Activated naive CD4-positive, alpha-beta T cell treated with anti-CD3 and anti-CD28 coated beads for 36 hours (primary cell): ENCODE measurements at regions of chr3 and their contacts with region 1.

Region 1: DNA sequence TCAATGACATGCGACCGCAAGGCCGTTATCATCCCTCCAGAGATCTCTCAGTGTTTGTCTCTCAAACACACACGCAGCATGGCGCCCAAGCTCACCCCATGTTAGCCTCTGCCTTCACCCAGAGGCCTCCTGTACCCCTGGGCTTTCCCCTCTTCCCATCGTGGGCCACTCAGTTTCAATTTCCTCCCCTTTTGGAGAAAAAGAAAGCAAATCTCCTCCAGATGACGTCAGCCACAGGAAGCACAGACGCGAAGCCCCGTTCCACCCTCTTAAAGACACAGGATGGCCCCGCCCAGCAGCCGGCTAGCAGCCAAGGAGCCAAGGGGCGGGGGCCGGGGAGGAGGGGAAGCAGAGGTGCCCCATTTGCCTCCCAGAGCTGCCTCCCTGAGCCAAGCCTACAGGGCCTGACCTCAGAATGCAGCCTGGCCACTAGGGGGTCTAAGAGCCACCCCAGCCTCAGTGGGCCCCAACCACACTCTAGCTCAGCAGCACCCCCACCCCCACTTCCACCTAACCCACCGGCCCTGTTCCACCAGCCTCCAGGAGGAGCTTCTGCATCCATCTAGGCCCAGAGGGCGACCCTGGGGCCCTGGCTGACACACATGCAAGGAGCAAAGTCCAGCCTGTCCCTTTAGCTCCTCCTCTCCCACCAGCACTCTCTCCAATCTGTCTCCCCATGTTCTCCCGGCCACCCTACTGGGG is 26.5 kb downstream of the ATRIP start:
- DNase-seq: peak; percentile 99
- H3K4me3 Mint-ChIP-seq: peak overlapping the region; percentile 78
- H3K27ac Mint-ChIP-seq: peak overlapping the region; percentile 97
- H3K4me1 Mint-ChIP-seq: peaks cover 55% of the 10 kb centered on the region
- H3K27me3 Mint-ChIP-seq: no peaks in the 10 kb centered on the region

Region 2: GRCh38 chr3:48240711-48241491 is 232.2 kb before region 1 on chr3 and contains the start of gene ZNF589:
- CTCF ChIA-PET with region 1: no interaction called
- intact Hi-C with region 1: loop called (anchors 1 kb)
- DNase-seq: peak; percentile 96
- H3K4me3 Mint-ChIP-seq: peak within 1 kb of the TSS; percentile 88
- H3K27ac Mint-ChIP-seq: peak within 1 kb of the TSS; percentile 86
- H3K4me1 Mint-ChIP-seq: peaks cover 28% of the 10 kb centered on the region
- H3K27me3 Mint-ChIP-seq: no peaks in the 10 kb centered on the region
- total RNA-seq, gene ZNF589: 15.8 to 16.3 TPM

Region 3: DNA sequence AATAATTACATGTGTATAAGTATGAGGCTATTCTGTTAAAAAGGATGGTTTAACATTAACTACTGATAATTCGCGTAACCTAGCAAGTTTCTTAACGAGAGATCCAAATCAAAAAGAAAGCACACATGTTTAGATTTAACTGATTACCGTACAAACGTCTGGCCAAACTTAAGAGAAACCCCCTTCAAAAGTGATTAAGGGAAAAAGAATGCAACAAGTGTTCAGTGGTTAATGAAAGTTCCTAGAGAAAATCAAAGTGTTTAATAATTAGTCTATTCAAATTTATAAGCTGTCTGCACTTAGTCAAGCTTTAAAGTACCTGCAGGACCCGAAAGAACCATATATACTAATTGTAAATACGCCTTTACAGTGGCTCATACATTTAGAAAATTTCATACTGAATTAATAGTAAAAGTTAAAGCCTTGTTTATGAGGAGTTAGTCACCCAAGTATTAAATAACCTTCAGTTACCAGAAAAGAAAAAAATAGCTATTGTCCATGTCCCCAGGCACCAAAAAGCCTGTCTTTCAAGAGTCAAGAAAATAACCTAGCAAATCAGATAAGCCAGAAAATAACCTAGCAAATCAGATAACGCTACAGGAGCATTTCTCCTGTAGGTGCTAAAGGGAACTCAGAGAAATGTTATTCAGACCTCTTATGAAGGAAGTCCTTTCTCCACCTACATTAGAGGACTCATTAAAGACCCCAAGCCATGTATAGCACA is 197.6 kb before region 1 on chr3:
- CTCF ChIA-PET with region 1: no interaction called
- intact Hi-C with region 1: no loop called
- DNase-seq: no peak
- H3K4me3 Mint-ChIP-seq: no peak overlapping the region
- H3K27ac Mint-ChIP-seq: no peak overlapping the region
- H3K4me1 Mint-ChIP-seq: no peaks in the 10 kb centered on the region
- H3K27me3 Mint-ChIP-seq: no peaks in the 10 kb centered on the region

Region 4: GRCh38 chr3:48507351-48508061 is 34.4 kb after region 1 on chr3:
- CTCF ChIA-PET with region 1: interaction called, 25 read pairs
- intact Hi-C with region 1: loop called (anchors 1 kb)
- DNase-seq: peak; percentile 82
- H3K4me3 Mint-ChIP-seq: peak overlapping the region; percentile 32
- H3K27ac Mint-ChIP-seq: peak overlapping the region; percentile 66
- H3K4me1 Mint-ChIP-seq: peaks cover 47% of the 10 kb centered on the region
- H3K27me3 Mint-ChIP-seq: no peaks in the 10 kb centered on the region

Region 5: DNA sequence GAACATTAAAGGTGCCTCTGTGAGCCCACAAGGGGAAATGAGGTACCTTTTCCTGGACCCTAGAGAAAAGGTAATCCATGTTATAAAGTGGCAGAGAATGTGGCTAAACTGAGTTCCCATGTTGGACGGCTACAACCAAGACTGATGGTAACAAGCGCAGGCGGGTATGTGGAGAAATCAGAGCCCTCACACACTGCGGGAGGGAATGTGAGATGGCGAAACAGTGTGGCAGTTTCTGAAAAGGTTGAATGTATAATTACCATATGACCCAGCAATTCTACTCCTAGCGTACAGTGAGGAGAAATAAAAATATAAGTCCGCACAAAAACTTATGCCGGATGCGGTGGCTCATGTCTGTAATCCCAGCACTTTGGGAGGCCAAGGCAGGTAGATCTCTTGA is 55.0 kb after region 1 on chr3:
- CTCF ChIA-PET with region 1: no interaction called
- intact Hi-C with region 1: no loop called
- DNase-seq: no peak
- H3K4me3 Mint-ChIP-seq: no peak overlapping the region
- H3K27ac Mint-ChIP-seq: no peak overlapping the region
- H3K4me1 Mint-ChIP-seq: no peaks in the 10 kb centered on the region
- H3K27me3 Mint-ChIP-seq: no peaks in the 10 kb centered on the region

Region 6: DNA sequence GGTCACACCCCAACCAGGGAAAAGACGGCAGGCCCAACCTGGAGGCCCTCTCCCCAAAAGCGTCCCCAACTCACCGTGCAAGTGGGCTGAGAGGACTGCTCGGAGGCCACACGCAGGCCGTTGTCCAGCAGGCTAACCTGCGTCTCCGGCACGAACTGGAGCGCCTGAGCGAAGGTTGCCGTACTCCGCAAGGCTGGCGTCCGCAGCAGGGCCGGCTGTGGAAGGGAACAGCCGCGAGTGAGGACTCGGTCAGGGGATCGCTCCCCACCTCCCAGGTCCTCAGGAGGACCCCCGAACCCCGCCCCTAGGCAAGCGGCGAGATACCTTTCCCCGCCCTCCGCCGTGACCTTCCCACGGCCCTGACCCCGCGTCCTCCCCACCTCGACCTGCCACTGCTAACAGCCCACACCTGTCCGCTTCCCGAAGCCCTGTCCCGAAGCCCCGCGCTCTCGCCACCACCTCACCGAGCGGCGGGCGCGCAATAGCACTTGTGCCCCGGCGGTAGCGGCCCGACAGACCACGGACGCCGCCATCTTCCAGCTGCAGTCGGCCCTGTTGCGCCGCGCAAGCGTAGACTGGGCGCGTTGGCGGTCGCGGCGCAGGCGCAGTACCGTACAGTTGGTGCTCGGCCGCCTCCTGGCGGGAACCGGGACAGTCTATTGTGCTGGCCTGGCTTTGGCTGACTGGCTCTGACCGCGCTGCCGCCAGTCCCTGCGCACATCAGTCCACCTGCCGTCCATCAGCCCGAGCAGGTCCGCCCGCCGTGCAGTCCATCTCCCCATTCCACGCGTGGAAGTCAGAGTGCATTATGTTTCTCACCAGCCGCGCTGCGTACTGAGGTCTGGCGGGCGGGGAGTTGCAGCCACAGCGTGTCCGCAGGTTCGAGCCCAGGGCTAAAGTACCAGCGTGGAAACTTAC is 136.3 kb after region 1 on chr3 and contains the start of gene UQCRC1:
- CTCF ChIA-PET with region 1: no interaction called
- intact Hi-C with region 1: loop called (anchors 5 kb)
- DNase-seq: peak; percentile 94
- H3K4me3 Mint-ChIP-seq: peak within 1 kb of the TSS; percentile 99
- H3K27ac Mint-ChIP-seq: peak within 1 kb of the TSS; percentile 92
- H3K4me1 Mint-ChIP-seq: peaks cover 23% of the 10 kb centered on the region
- H3K27me3 Mint-ChIP-seq: no peaks in the 10 kb centered on the region
- total RNA-seq, gene UQCRC1: 211 to 232 TPM

Region 7: GRCh38 chr3:50235716-50236496 is 1762.8 kb after region 1 on chr3 and contains the start of gene GNAI2:
- CTCF ChIA-PET with region 1: no interaction called
- intact Hi-C with region 1: loop called (anchors 10 kb)
- DNase-seq: peak; percentile 99
- H3K4me3 Mint-ChIP-seq: peak within 1 kb of the TSS; percentile 95
- H3K27ac Mint-ChIP-seq: peak within 1 kb of the TSS; percentile 92
- H3K4me1 Mint-ChIP-seq: peaks cover 33% of the 10 kb centered on the region
- H3K27me3 Mint-ChIP-seq: no peaks in the 10 kb centered on the region
- total RNA-seq, gene GNAI2: 272 to 276 TPM